Natural killer cell (primary cell): ENCODE measurements at regions of chr19 and their contacts with region 1.

Region 1: DNA sequence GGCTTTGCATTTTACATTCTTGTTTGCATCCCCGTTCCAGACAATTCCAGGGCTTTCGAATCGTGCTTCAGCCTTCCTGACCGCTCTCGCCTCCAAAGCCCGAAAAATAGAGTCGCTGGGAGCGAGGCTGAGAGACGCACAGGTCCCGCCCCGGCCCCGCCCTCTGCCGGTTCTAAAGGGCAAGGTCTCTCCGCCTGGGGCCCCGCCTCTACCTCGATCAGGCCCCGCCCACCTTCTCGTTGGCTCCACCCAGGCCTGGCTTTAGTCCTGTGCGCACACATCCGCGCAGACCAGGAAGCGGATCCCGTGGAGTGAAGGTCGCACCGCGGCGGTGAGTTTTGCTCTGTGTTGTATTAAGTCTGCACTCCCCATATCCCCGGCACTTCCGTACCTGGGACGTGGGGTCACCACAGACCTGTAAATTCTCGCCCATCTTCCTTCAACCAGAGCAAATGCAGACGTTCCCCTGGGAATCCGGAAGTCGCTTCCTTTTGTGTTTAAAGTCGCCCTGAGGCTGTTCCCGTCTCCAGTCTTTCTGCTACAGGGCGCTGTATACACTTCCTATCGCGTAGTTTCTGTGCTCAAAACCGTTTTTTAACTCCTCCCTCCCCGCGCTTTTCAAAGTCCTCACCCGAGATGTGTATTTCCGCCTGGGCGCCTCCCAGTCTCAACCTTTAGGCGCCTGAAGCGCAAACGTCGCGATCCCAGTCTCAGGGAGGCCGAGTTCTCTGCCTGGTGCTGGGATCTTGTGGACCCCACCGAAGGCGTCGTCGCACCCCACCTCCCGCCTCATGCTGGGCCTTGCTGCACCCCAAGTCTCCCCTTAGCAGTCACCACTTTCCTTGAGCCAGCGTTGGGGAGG is at the start of gene ZNF701:
- DNase-seq: peak; percentile 97 to 99
- ATAC-seq: peak; percentile 98 to 100 (median 99)
- H3K4me3 ChIP-seq: peak within 1 kb of the TSS; percentile 91
- H3K4me3 Mint-ChIP-seq: peak within 1 kb of the TSS; percentile 99
- H3K27ac ChIP-seq: peak within 1 kb of the TSS; percentile 76
- H3K27ac Mint-ChIP-seq: peak within 1 kb of the TSS; percentile 91 to 94
- H3K4me1 ChIP-seq: peaks cover 12% of the 10 kb centered on the region
- H3K4me1 Mint-ChIP-seq: peaks cover 32 to 39% of the 10 kb centered on the region in 2 donors
- H3K27me3 ChIP-seq: no peaks in the 10 kb centered on the region
- H3K27me3 Mint-ChIP-seq: no peaks in the 10 kb centered on the region
- CTCF ChIP-seq: peak; percentile 37
- total RNA-seq, gene ZNF701: 27.4 to 41.2 (median 28.4) TPM

Region 2: GRCh38 chr19:52507266-52507665 is 63.0 kb before region 1 on chr19:
- intact Hi-C with region 1: no loop called
- DNase-seq: no peak
- ATAC-seq: no peak
- H3K4me3 ChIP-seq: no peak overlapping the region
- H3K4me3 Mint-ChIP-seq: no peak overlapping the region
- H3K27ac ChIP-seq: no peak overlapping the region
- H3K27ac Mint-ChIP-seq: no peak overlapping the region
- H3K4me1 ChIP-seq: no peaks in the 10 kb centered on the region
- H3K4me1 Mint-ChIP-seq: no peaks in the 10 kb centered on the region
- H3K27me3 ChIP-seq: no peaks in the 10 kb centered on the region
- H3K27me3 Mint-ChIP-seq: no peaks in the 10 kb centered on the region
- CTCF ChIP-seq: no peak

Region 3: DNA sequence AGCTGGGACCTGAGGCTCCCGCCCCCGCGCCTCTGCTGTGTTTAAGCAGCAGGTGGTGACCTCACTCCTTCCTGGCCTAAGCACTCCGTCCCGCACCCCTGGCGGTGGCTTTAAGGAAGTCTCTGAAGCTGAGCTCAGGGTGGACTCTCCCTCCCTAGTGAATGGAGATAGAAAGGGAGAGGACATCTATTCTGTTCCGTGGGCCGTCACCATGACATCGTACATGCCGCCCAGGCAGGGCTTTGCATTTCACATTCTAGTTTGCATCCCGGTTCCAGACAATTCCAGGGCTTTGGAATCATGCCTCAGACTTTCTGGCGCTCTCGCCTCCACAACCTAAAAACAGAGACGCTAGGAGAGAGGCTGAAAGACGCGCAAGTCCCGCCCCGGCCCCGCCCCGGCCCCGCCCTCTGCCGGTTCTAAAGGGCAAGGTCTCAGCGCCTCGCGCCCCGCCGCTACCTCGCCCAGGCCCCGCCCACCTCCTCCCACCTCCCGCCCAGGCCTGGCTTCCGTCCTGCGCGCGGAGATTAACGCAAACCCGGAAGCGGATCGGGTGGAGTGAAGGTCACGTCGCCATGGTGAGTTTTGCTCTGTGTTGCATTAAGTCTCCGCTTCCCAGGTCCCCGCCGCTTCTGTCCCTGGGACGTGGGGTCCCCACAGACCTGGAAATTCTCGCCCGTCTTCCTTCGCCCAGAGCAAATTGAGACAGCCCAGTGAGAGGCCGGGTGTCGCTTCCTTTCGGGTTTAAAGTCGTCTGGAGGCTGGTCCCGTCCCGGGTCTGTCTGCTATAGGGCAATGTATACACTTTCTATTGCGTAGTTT is 42.9 kb before region 1 on chr19 and contains the start of gene ZNF808:
- intact Hi-C with region 1: loop called (anchors 1 kb)
- DNase-seq: peak; percentile 88 to 96
- ATAC-seq: peak; percentile 93 to 99 (median 94)
- H3K4me3 ChIP-seq: peak within 1 kb of the TSS; percentile 84
- H3K4me3 Mint-ChIP-seq: peak within 1 kb of the TSS; percentile 99
- H3K27ac ChIP-seq: peak within 1 kb of the TSS; percentile 88
- H3K27ac Mint-ChIP-seq: peak within 1 kb of the TSS; percentile 95 to 99
- H3K4me1 ChIP-seq: peaks cover 22% of the 10 kb centered on the region
- H3K4me1 Mint-ChIP-seq: peaks cover 21 to 22% of the 10 kb centered on the region in 2 donors
- H3K27me3 ChIP-seq: no peaks in the 10 kb centered on the region
- H3K27me3 Mint-ChIP-seq: no peaks in the 10 kb centered on the region
- CTCF ChIP-seq: peak; percentile 52
- total RNA-seq, gene ZNF808: 43.8 to 69.1 (median 49.5) TPM

Region 4: GRCh38 chr19:52542984-52543664 is 27.1 kb before region 1 on chr19:
- intact Hi-C with region 1: loop called (anchors 1 kb)
- DNase-seq: peak; percentile 46 to 76
- ATAC-seq: peak; percentile 89 to 95 (median 93)
- H3K4me3 ChIP-seq: no peak overlapping the region
- H3K4me3 Mint-ChIP-seq: peak overlapping the region; percentile 84
- H3K27ac ChIP-seq: peak overlapping the region; percentile 70
- H3K27ac Mint-ChIP-seq: peak overlapping the region; percentile 95
- H3K4me1 ChIP-seq: peaks cover 46% of the 10 kb centered on the region
- H3K4me1 Mint-ChIP-seq: peaks cover 30 to 35% of the 10 kb centered on the region in 2 donors
- H3K27me3 ChIP-seq: no peaks in the 10 kb centered on the region
- H3K27me3 Mint-ChIP-seq: no peaks in the 10 kb centered on the region
- CTCF ChIP-seq: no peak

Region 5: GRCh38 chr19:52601025-52601973 is 31.1 kb after region 1 on chr19:
- intact Hi-C with region 1: loop called (anchors 2 kb)
- DNase-seq: peak; percentile 92 to 94
- ATAC-seq: peak; percentile 99
- H3K4me3 ChIP-seq: peak overlapping the region; percentile 75
- H3K4me3 Mint-ChIP-seq: peak overlapping the region; percentile 96
- H3K27ac ChIP-seq: peak overlapping the region; percentile 56
- H3K27ac Mint-ChIP-seq: peak overlapping the region; percentile 39 to 83
- H3K4me1 ChIP-seq: peaks cover 21% of the 10 kb centered on the region
- H3K4me1 Mint-ChIP-seq: peaks cover 13 to 28% of the 10 kb centered on the region in 2 donors
- H3K27me3 ChIP-seq: no peaks in the 10 kb centered on the region
- H3K27me3 Mint-ChIP-seq: no peaks in the 10 kb centered on the region
- CTCF ChIP-seq: peak; percentile 57